ENCODE measurements at regions of chr12 and their contacts with region 1.

Region 1: GRCh38 chr12:122421821-122422729 is at the start of gene CLIP1:
- DNase-seq: peak; percentile 16 to 79 (median 55)
- ATAC-seq: peak; percentile 80
- H3K4me3 ChIP-seq: peak within 1 kb of the TSS; percentile 49 to 68
- H3K4me3 Mint-ChIP-seq: peak within 1 kb of the TSS; percentile 91
- H3K27ac ChIP-seq: peak within 1 kb of the TSS; percentile 49 to 71
- H3K27ac Mint-ChIP-seq: peak within 1 kb of the TSS; percentile 84
- H3K4me1 ChIP-seq: peaks cover 19% of the 10 kb centered on the region
- H3K4me1 Mint-ChIP-seq: peaks cover 30% of the 10 kb centered on the region
- H3K27me3 ChIP-seq: no peaks in the 10 kb centered on the region
- H3K27me3 Mint-ChIP-seq: no peaks in the 10 kb centered on the region
- CTCF ChIP-seq: peak; percentile 52
- total RNA-seq, gene CLIP1: 48.6 to 49.6 TPM

Region 2: DNA sequence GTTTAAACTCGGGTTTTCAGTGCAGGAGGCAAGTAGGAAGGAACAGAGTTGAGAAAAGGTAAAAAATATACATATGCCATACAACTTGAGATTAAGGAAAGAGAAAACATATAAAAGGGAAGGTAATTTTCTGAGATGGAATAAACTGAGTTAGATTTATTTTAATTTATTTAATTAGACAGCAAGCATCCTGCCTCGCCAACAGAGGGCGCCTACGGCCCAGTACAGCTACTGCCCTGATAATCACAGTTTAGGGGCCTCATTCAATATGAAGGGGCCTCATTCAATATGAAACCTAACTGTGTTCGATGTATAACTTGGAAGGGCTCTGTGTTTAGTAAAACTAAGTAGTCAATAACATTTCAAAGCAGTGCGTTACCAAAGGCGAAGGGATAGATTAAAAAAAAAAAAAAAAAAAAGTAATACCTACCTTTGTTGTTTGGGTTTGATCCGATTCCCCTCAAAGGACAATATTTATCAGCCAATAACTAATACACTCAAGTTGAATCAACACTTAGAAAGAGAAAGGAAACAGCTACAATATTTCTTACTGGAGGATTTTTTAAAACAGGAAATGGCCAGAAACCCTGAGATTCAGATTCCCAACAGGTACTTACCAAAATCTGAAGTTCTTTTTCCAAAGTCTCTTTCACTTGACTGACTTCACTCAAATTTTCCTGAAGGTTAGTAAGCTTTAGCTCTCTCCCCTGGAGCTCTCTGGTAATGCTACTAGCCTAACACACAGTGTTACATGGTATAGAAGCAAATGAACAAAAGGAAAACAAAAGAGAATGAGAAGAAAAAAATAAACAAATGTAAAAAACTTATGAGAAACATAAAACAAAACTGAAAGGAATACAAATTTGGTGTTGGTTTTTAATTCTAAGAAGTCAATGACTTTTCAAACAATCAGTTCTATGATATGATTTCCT is 85.8 kb before region 1 on chr12:
- CTCF ChIA-PET with region 1: no interaction called
- POLR2A ChIA-PET with region 1: no interaction called
- intact Hi-C with region 1: loop called in 1 of 2 experiments (anchors 2 kb)
- DNase-seq: peak in 8 of 9 experiments; percentile 16 to 61 (median 52)
- ATAC-seq: no peak
- H3K4me3 ChIP-seq: no peak overlapping the region
- H3K4me3 Mint-ChIP-seq: no peak overlapping the region
- H3K27ac ChIP-seq: no peak overlapping the region
- H3K27ac Mint-ChIP-seq: no peak overlapping the region
- H3K4me1 ChIP-seq: no peaks in the 10 kb centered on the region
- H3K4me1 Mint-ChIP-seq: peaks cover 6% of the 10 kb centered on the region
- H3K27me3 ChIP-seq: no peaks in the 10 kb centered on the region
- H3K27me3 Mint-ChIP-seq: no peaks in the 10 kb centered on the region
- CTCF ChIP-seq: peak; percentile 37

Region 3: DNA sequence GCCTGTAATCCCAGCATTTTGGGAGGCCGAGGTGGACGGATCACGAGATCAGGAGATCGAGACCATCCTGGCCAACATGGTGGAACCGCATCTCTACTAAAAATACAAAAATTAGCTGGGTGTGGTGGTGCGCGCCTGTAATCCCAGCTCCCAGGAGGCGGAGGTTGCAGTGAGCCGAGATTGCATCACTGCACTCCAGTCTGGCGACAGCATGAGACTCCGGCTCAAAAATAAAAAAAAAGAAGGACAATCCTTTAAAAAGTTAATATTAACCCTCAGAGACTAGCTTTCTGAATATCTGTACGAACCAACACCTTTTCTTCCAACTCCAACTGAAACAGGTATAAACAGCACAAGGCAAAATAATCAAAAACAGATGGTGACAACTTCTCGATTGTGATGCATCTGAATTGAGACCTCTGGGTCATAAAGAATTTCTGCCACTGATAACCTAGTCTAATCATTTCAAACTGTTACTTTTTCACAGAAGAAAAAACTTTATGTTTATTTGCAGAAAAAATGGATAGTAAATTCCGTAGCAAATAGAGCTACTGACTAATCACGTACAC is 27.4 kb before region 1 on chr12:
- CTCF ChIA-PET with region 1: interaction called, 28 read pairs
- POLR2A ChIA-PET with region 1: interaction called, 4 read pairs
- intact Hi-C with region 1: loop called (anchors 1 kb)
- DNase-seq: no peak
- ATAC-seq: no peak
- H3K4me3 ChIP-seq: no peak overlapping the region
- H3K4me3 Mint-ChIP-seq: no peak overlapping the region
- H3K27ac ChIP-seq: no peak overlapping the region
- H3K27ac Mint-ChIP-seq: peak overlapping the region; percentile 56
- H3K4me1 ChIP-seq: peaks cover 17% of the 10 kb centered on the region
- H3K4me1 Mint-ChIP-seq: peaks cover 36% of the 10 kb centered on the region
- H3K27me3 ChIP-seq: no peaks in the 10 kb centered on the region
- H3K27me3 Mint-ChIP-seq: no peaks in the 10 kb centered on the region
- CTCF ChIP-seq: no peak

Region 4: DNA sequence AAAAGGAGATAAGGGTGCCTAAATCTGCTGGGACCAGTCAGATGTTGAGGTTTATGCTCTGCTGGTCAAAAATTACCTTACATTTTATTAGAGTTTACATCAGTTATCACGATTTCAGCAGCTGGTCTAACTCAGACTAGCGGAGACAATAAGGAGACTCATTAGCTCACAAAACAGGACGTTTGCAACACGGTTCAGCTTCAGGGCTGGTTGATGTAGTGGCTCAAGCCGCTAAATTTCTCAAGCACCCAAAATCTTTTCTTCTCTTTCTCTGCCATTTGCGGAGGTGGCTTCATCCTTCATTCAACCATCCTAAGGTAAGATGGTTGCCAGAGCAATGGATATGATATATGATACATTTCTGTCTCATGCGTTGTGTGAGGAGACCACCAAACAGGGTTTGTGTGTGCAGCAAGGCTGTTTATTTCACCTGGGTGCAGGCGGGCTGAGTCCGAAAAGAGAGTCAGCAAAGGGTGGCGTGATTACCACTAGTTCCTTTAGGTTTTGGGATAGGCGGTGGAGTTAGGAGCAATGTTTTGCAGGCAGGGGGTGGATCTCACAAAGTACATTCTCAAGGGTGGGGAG is 30.7 kb after region 1 on chr12:
- CTCF ChIA-PET with region 1: interaction called, 4 read pairs
- POLR2A ChIA-PET with region 1: interaction called, 3 read pairs
- intact Hi-C with region 1: loop called (anchors 1 to 2 kb)
- DNase-seq: peak in 2 of 9 experiments; percentile 35 to 56
- ATAC-seq: peak; percentile 18
- H3K4me3 ChIP-seq: peak overlapping the region in 1 of 2 experiments; percentile 1
- H3K4me3 Mint-ChIP-seq: peak overlapping the region; percentile 74
- H3K27ac ChIP-seq: peak overlapping the region; percentile 33 to 74
- H3K27ac Mint-ChIP-seq: peak overlapping the region; percentile 97
- H3K4me1 ChIP-seq: peaks cover 29% of the 10 kb centered on the region
- H3K4me1 Mint-ChIP-seq: peaks cover 27% of the 10 kb centered on the region
- H3K27me3 ChIP-seq: no peaks in the 10 kb centered on the region
- H3K27me3 Mint-ChIP-seq: no peaks in the 10 kb centered on the region
- CTCF ChIP-seq: no peak

Measured in CD8-positive, alpha-beta T cell (primary cell).